Mammary epithelial cell (primary cell): ENCODE measurements at regions of chr19 and their contacts with region 1.

Region 1: DNA sequence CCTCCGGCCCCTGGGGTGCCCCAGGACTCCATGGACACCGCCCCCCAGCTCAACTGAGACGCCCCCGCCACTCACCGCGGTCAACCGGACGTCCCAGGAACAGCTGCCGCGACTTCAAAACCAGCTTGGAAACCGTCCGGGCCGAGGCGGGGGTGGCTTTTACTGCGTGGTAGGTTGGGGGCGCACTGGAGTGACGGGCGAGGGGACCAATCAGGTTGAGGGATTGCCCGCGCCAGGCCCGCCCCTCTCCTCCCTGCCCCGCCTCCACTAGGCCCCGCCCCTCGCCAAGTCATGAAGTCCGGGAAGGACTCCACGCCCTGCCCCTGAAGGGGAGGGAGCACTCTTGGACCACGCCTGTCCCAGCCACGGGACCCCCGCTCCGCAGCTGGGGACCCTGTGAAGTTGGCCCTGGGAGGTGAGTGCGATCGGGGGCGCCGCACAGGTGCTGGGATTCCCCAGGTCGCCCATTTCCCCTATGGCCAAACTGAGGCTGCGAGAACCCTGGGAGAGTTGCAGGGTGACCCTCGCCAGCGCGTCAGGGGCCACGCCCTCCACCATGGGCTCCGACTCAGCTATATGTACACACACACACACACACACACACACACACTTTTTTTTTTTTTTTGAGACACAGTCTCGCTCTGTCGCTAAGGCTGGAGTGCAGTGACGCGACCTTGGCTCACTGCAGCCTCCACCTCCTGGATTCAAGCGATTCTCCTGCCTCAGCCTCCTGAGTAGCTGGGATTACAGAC is at the start of gene PLIN3:
- DNase-seq: peak; percentile 92
- H3K4me3 ChIP-seq: peak within 1 kb of the TSS; percentile 74 to 100 (median 80)
- H3K27ac ChIP-seq: peak within 1 kb of the TSS; percentile 61
- H3K4me1 ChIP-seq: peaks cover 14% of the 10 kb centered on the region
- H3K27me3 ChIP-seq: no peaks in the 10 kb centered on the region
- CTCF ChIP-seq: no peak
- total RNA-seq, gene PLIN3: 89.4 to 147 TPM

Region 2: GRCh38 chr19:4768934-4769777 is 98.6 kb before region 1 on chr19:
- CTCF ChIA-PET with region 1: no interaction called
- dilution Hi-C with region 1: no loop called
- in situ Hi-C with region 1: no loop called
- intact Hi-C with region 1: no loop called
- DNase-seq: peak; percentile 66
- H3K4me3 ChIP-seq: no peak overlapping the region
- H3K27ac ChIP-seq: no peak overlapping the region
- H3K4me1 ChIP-seq: no peaks in the 10 kb centered on the region
- H3K27me3 ChIP-seq: no peaks in the 10 kb centered on the region
- CTCF ChIP-seq: no peak

Region 3: GRCh38 chr19:4844348-4845179 is 23.1 kb before region 1 on chr19:
- CTCF ChIA-PET with region 1: no interaction called
- dilution Hi-C with region 1: no loop called
- in situ Hi-C with region 1: no loop called
- intact Hi-C with region 1: no loop called
- DNase-seq: no peak
- H3K4me3 ChIP-seq: no peak overlapping the region
- H3K27ac ChIP-seq: no peak overlapping the region
- H3K4me1 ChIP-seq: no peaks in the 10 kb centered on the region
- H3K27me3 ChIP-seq: no peaks in the 10 kb centered on the region
- CTCF ChIP-seq: no peak

Region 4: GRCh38 chr19:4968462-4969291 is 101.0 kb after region 1 on chr19 and contains the start of gene KDM4B:
- CTCF ChIA-PET with region 1: no interaction called
- dilution Hi-C with region 1: no loop called
- in situ Hi-C with region 1: no loop called
- intact Hi-C with region 1: loop called (anchors 2 kb)
- DNase-seq: peak; percentile 100
- H3K4me3 ChIP-seq: peak within 1 kb of the TSS; percentile 67 to 84 (median 68)
- H3K27ac ChIP-seq: peak within 1 kb of the TSS; percentile 58
- H3K4me1 ChIP-seq: peaks cover 28% of the 10 kb centered on the region
- H3K27me3 ChIP-seq: no peaks in the 10 kb centered on the region
- CTCF ChIP-seq: no peak
- total RNA-seq, gene KDM4B: 20.3 to 33.5 TPM